T-cell (primary cell): ENCODE measurements at regions of chr7 and their contacts with region 1.

Region 1: DNA sequence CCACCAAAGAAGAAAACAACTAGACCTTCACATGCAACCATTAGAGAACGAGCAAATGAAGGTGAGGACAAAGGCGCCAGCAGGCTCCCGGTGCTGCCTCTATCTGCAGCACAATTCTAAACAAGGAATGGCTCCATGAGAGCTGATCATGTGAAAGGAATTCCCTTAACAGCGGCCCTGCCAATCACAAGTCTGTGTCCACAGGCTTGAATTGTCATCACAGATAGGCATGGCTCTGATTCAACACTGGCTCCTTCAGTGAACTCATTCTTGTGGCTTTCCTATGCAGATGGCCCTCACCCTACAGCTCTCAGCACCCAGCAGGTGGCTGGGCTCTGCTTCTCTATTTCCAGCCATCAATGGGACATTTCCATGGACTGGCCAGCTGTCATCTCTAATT is 36.2 kb downstream of the LAMB1 start:
- DNase-seq: no peak
- ATAC-seq: no peak
- H3K4me3 ChIP-seq: no peak overlapping the region
- H3K4me3 Mint-ChIP-seq: no peak overlapping the region
- H3K27ac ChIP-seq: no peak overlapping the region
- H3K27ac Mint-ChIP-seq: no peak overlapping the region
- H3K4me1 ChIP-seq: no peaks in the 10 kb centered on the region
- H3K4me1 Mint-ChIP-seq: no peaks in the 10 kb centered on the region
- H3K27me3 ChIP-seq: peaks cover 0 to 6% of the 10 kb centered on the region in 2 experiments
- H3K27me3 Mint-ChIP-seq: peaks cover 3 to 8% of the 10 kb centered on the region in 2 donors

Region 2: DNA sequence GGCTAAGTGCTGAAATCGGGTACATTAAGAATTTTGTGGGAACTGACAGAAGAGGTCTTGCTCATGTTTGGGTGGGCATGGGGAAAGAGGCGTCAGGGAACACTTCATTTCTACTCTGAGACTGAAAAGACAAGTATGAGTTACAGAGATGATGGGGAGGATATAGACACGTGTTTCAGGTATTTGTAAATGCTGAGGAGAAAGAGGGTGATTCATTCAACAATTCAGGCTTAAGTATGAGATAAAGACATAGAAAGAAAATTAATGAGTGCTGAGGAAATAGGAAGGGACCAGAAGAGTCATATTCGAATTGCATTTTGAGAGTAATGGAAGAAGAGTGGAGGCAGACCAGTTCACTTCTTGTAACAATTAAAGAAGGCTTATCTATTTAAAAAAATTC is 654.3 kb before region 1 on chr7:
- CTCF ChIA-PET with region 1: no interaction called
- POLR2A ChIA-PET with region 1: no interaction called
- DNase-seq: no peak
- ATAC-seq: no peak
- H3K4me3 ChIP-seq: no peak overlapping the region
- H3K4me3 Mint-ChIP-seq: no peak overlapping the region
- H3K27ac ChIP-seq: no peak overlapping the region
- H3K27ac Mint-ChIP-seq: no peak overlapping the region
- H3K4me1 ChIP-seq: no peaks in the 10 kb centered on the region
- H3K4me1 Mint-ChIP-seq: no peaks in the 10 kb centered on the region
- H3K27me3 ChIP-seq: no peaks in the 10 kb centered on the region
- H3K27me3 Mint-ChIP-seq: no peaks in the 10 kb centered on the region

Region 3: GRCh38 chr7:107982918-107983389 is 16.2 kb after region 1 on chr7:
- CTCF ChIA-PET with region 1: no interaction called
- POLR2A ChIA-PET with region 1: interaction called in 1 of 2 experiments, 10 read pairs
- DNase-seq: no peak
- ATAC-seq: no peak
- H3K4me3 ChIP-seq: no peak overlapping the region
- H3K4me3 Mint-ChIP-seq: no peak overlapping the region
- H3K27ac ChIP-seq: no peak overlapping the region
- H3K27ac Mint-ChIP-seq: no peak overlapping the region
- H3K4me1 ChIP-seq: no peaks in the 10 kb centered on the region
- H3K4me1 Mint-ChIP-seq: no peaks in the 10 kb centered on the region
- H3K27me3 ChIP-seq: no peaks in the 10 kb centered on the region
- H3K27me3 Mint-ChIP-seq: peaks cover 10 to 19% of the 10 kb centered on the region in 2 donors